AG04449 (cell line): ENCODE measurements at regions of chrX and their contacts with region 1.

Region 1: DNA sequence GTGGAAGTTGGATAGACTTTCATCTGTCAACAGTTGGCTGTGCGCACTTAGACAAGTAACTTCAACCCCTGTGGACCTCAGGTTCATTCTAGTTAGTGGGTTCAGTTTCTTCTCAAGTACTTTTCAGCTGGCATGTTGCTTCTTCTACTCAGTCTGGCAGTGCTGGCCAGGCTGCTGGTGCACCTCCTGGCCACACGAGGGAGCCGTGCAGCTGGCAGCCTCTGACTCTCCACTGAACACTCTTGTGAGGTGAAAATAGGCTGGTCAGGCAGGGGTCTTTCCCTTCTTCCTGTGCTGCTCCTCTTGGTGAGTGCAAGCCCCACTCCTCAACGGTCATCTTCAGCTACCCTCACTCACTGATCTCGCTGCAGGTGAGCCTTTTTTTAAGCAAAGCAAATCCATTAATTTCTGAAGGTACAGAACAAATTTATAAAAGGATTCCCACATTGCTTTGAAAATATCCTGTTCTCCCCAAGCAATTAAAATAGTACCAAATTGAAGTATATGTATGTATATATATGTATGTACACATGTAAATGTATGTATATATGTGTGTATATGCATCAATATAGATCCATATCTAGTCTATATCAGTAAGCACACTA is 30.6 kb downstream of the LONRF3 start:
- DNase-seq: no peak
- H3K4me3 ChIP-seq: no peak overlapping the region
- CTCF ChIP-seq: peak; percentile 92

Region 2: GRCh38 chrX:118847676-118848075 is 157.3 kb before region 1 on chrX:
- CTCF ChIA-PET with region 1: interaction called, 13 read pairs
- POLR2A ChIA-PET with region 1: no interaction called
- DNase-seq: no peak
- H3K4me3 ChIP-seq: no peak overlapping the region
- CTCF ChIP-seq: peak; percentile 29

Region 3: GRCh38 chrX:118990512-118991227 is 14.4 kb before region 1 on chrX:
- CTCF ChIA-PET with region 1: interaction called, 17 read pairs
- POLR2A ChIA-PET with region 1: no interaction called
- DNase-seq: no peak
- H3K4me3 ChIP-seq: no peak overlapping the region
- CTCF ChIP-seq: no peak

Region 4: DNA sequence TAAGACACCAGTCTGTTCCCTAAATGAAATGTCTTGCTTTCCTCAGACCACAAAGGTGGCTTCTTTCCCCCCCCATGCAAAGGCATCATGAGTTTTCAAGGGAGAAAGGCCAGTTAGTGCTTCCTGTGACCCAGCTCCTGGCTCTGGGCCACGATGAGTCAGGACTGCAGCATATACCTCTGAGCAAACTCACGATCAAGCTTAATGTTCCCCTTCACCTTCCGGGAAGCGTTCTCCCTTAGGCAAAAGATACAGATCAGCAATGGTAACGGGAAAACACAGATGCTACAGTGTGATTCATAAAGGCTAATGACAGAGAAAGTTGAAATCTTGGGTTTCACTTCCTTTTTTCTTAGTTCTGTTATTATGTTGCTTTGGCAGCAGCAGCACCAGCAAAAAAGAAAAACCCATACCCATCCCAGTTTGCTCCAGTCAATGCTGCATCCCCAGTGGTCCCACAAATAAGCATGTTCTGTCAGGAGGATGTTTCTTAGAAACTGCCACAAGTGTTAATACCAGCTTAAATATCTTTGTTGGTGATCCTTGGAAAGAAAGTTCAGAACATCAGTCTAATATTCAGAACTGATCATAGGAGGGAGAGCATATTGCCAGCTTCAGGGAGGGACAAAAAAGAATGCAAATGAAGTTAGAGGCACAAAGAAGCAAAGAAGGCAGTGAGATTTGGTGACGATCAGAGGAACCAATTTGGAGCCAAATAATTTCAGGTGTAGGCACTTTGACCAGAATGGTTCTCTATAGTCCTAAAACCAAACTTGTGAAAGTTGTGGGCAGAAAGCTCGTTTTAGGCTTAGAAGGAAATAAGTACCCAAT is 10.6 kb after region 1 on chrX:
- CTCF ChIA-PET with region 1: interaction called, 14 read pairs
- POLR2A ChIA-PET with region 1: no interaction called
- DNase-seq: peak; percentile 3
- H3K4me3 ChIP-seq: no peak overlapping the region
- CTCF ChIP-seq: no peak

Region 5: DNA sequence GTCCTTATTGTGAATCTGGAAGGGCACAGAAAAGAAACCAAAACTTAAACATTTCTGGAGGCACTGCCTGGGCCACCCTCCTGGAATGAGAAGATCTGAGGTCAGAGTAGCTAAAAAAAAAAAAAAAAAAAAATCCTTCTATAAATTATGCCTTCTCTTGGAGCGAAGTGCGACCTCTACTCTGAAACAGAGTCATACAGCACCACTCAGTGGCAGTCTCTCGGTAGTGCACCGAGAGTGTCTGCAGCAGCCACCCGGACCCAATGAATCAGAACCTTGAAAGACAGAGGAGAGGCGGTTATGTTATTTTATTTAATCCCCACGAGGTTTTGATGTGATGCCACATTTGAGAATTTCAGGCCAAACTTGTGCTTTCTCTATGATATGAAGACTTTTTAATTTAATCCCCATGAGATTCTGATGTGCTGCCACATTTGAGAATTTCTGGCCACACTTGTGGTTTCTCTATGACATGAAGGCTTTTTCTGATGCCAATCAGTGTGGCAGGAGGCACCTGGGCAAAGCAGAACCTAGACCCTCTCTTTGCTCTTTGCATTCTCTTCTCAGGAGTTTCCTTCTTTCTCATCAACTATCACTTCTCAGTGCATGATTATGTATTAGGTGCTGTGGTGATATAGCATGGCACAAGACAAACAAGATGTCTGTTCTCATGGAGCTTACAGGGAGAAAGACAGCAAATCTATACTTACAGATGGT is 62.2 kb after region 1 on chrX:
- CTCF ChIA-PET with region 1: interaction called, 88 read pairs
- POLR2A ChIA-PET with region 1: no interaction called
- DNase-seq: no peak
- H3K4me3 ChIP-seq: no peak overlapping the region
- CTCF ChIP-seq: peak; percentile 49

Region 6: GRCh38 chrX:119105826-119106225 is 100.8 kb after region 1 on chrX:
- CTCF ChIA-PET with region 1: no interaction called
- POLR2A ChIA-PET with region 1: no interaction called
- DNase-seq: no peak
- H3K4me3 ChIP-seq: no peak overlapping the region
- CTCF ChIP-seq: no peak